ENCODE measurements at regions of chr13 and their contacts with region 1.

Region 1: DNA sequence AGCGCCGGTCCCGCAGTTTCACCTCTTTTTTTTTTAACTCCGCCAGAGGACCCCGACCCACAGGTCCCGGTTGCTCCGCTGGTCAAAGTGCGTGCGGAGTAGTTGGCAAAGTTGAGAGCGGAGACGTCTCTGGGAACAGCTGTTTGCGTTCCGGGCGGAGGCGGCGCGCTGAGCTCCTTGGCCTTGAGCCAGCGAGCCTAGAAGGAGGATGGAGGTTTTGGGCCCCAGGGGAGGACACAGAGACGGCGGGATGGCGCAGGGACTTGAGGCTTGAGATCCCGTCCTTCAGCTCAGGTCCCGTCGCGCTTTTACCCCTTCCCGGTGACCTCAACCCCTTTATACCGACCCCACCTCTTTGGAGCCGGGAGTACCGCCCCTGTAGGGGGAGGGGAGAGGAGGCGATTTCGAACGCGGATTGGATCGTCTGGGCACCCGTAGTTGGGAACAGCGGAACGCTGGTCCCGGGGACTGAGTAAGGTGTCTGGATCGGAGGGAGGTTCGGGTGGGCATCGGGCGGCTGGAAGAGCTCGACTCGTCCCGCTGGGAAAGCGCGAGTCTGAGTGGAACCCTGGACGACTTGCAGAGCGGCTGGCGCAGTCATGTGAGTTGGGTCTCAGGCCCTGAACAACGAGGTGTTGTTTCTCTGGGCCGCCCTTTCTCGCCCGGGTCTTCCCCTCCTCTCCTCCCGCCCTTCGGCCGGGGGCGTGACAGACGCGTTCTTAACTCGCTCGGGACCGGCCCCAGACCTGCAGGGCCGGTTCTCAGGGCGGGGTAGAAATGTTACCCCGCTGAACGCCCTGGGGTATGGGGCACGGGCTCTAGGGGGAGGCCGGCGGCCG is at the start of gene WBP4:
- DNase-seq: peak; percentile 92
- ATAC-seq: peak; percentile 74
- H3K4me3 Mint-ChIP-seq: peak within 1 kb of the TSS; percentile 99
- H3K27ac Mint-ChIP-seq: peak within 1 kb of the TSS; percentile 99
- H3K4me1 Mint-ChIP-seq: peaks cover 47% of the 10 kb centered on the region
- H3K27me3 Mint-ChIP-seq: no peaks in the 10 kb centered on the region
- total RNA-seq, gene WBP4: 9.7 to 10.4 TPM

Region 2: DNA sequence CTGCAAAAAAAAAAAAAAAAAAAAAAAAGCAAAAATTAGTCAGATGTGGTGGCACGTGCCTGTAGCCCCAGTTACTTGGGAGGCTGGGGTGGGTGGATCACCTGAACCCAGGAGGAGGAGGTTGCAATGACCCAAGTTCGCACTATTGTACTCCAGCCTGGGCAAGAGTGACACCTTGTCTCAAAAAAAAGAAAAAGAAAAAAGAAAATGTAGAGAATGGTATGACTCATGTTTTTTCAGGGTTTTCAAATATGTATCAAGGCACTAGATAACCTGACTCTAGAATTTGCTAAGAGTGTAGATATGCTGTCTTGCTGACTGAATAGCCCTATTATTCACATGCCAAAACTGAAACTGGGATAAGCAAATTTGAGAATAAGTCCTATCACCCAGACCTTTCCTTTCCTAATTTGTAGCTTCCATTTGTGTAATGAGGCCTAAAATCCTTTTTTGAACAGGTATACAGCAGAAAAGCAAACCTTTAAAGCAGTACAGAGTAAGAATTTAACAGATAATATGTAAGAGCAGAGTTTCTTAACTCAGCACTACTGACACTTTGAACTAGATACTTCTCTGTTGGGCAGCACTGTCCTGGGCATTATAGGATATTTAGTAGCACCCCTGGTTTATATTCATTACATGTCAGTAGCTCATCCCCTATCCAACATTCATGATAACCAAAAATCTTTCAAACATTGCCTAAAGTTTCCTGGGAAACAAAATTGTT is 150.8 kb before region 1 on chr13:
- CTCF ChIA-PET with region 1: no interaction called
- POLR2A ChIA-PET with region 1: no interaction called
- DNase-seq: no peak
- ATAC-seq: no peak
- H3K4me3 Mint-ChIP-seq: no peak overlapping the region
- H3K27ac Mint-ChIP-seq: no peak overlapping the region
- H3K4me1 Mint-ChIP-seq: no peaks in the 10 kb centered on the region
- H3K27me3 Mint-ChIP-seq: no peaks in the 10 kb centered on the region

Region 3: GRCh38 chr13:41013835-41014234 is 47.5 kb before region 1 on chr13:
- CTCF ChIA-PET with region 1: interaction called, 4 read pairs
- POLR2A ChIA-PET with region 1: interaction called, 19 read pairs
- DNase-seq: no peak
- ATAC-seq: no peak
- H3K4me3 Mint-ChIP-seq: peak overlapping the region; percentile 89
- H3K27ac Mint-ChIP-seq: peak overlapping the region; percentile 78
- H3K4me1 Mint-ChIP-seq: peaks cover 53% of the 10 kb centered on the region
- H3K27me3 Mint-ChIP-seq: no peaks in the 10 kb centered on the region